Activated naive CD4-positive, alpha-beta T cell treated with anti-CD3 and anti-CD28 coated beads for 36 hours (primary cell): ENCODE measurements at regions of chr2 and their contacts with region 1.

Region 1: DNA sequence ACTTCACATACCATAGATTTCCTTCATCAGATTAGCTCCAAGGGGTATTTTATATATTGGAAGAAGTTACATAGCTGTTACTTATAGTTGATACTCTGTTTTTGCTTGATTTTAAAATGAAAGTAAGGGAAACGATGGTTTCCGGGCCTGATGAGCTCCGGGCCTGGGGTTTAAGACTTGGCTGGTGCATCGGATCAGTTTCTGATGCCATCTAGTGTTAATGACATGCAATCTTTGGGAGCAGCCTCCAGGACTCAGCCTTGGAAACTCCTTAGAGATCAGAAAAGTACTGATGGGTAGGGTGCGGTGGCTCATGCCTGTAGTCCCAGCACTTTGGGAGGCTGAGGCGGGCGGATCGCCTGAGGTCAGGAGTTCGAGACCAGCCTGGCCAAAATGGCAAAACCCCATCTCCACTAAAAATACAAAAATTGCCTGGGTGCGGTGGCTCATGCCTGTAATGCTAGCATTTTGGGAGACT is 47.1 kb upstream of the CNOT11 start:
- DNase-seq: peak; percentile 76
- H3K4me3 Mint-ChIP-seq: peak overlapping the region; percentile 45
- H3K27ac Mint-ChIP-seq: peak overlapping the region; percentile 65
- H3K4me1 Mint-ChIP-seq: no peaks in the 10 kb centered on the region
- H3K27me3 Mint-ChIP-seq: no peaks in the 10 kb centered on the region

Region 2: DNA sequence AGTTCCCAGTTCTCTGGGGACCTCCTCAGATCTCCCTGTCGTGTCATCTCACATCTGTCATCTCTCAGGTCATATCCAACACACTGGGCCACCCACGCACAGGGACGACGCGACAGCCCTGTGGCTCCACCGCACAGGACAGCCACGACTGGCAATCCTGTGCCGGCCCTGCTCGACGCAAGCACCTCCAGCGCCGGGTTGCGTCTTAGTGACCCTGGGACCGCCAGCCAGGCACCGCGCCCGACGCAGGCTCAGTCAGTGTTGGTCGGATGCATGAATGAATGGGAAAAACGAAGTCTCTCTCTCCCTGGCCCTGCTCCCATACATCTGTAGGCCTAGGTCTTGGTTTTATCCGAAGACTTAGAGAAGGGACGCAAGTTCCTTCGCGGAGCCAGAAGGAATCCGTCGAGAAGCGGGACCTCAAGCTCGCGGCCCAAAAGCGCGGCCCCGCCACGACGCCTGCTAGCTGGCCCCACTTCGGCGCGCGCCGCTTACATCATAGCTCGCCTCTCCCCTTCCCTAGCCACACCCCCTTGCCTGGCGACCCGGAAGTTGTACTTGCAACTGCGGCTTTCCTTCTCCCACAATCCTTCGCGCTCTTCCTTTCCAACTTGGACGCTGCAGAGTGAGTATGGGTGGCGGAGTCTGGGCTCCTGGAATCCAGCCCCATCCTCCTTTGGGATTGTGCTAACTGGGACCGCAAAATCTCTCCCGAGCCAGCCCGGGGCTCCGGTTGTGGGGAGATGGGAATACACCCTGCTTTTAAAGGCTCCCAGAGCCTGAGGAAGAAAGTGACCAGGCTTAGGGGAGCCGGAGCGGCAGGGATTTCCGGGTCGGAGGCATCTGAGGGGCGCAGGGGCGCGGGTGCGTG is 203.6 kb before region 1 on chr2 and contains the start of gene RPL31:
- CTCF ChIA-PET with region 1: interaction called, 12 read pairs
- intact Hi-C with region 1: no loop called
- DNase-seq: peak; percentile 99
- H3K4me3 Mint-ChIP-seq: peak within 1 kb of the TSS; percentile 99
- H3K27ac Mint-ChIP-seq: peak within 1 kb of the TSS; percentile 94
- H3K4me1 Mint-ChIP-seq: peaks cover 46% of the 10 kb centered on the region
- H3K27me3 Mint-ChIP-seq: no peaks in the 10 kb centered on the region
- total RNA-seq, gene RPL31: 2,225 to 2,255 TPM

Region 3: DNA sequence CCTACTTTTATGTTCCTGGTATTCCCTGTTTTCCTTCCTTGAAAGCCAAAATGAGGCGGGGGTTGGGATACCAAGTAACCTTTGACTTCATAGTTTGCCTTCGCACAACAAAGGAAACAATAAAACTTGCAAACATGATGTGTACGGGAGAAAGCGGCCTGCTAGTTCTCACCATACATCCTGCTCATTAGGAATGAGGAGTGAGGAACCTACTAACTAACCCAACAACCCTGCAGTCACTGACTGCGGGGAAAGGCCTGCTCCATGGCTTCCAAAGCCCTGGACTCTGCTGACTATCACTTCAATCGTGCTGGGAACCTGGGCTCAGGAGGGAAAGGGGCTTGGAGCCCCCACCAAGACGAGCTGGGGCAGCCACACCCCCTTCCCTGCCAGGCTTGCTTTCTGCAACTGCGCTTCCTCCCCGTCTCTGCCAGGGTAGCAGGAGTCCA is 179.3 kb before region 1 on chr2:
- CTCF ChIA-PET with region 1: interaction called, 10 read pairs
- intact Hi-C with region 1: no loop called
- DNase-seq: no peak
- H3K4me3 Mint-ChIP-seq: no peak overlapping the region
- H3K27ac Mint-ChIP-seq: no peak overlapping the region
- H3K4me1 Mint-ChIP-seq: no peaks in the 10 kb centered on the region
- H3K27me3 Mint-ChIP-seq: no peaks in the 10 kb centered on the region

Region 4: GRCh38 chr2:101151141-101151858 is 54.3 kb before region 1 on chr2 and contains the start of gene TBC1D8:
- CTCF ChIA-PET with region 1: interaction called, 9 read pairs
- intact Hi-C with region 1: loop called (anchors 1 kb)
- DNase-seq: peak; percentile 66
- H3K4me3 Mint-ChIP-seq: peak within 1 kb of the TSS; percentile 77
- H3K27ac Mint-ChIP-seq: no peak within 1 kb of the TSS
- H3K4me1 Mint-ChIP-seq: peaks cover 17% of the 10 kb centered on the region
- H3K27me3 Mint-ChIP-seq: peaks cover 19% of the 10 kb centered on the region
- total RNA-seq, gene TBC1D8: 4.0 to 4.5 TPM

Region 5: DNA sequence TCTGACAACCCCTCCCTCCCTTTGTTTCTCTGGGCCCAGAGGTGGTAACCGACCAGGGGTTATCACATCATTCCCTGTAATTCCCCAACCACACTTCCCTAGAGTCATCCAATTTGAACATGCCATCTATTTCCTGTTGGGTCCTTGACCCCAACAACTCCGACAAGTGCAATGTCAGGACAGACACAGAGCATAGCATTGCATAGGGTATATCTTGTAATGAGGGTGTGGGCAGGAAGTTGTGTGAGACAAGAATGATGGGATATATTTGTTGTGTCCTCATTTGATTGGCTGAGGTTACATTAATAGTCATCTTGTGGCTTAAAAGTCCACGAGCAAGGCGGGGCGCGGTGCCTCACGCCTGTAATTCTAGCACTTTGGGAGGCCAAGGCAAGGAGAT is 13.7 kb after region 1 on chr2:
- CTCF ChIA-PET with region 1: interaction called, 14 read pairs
- intact Hi-C with region 1: no loop called
- DNase-seq: no peak
- H3K4me3 Mint-ChIP-seq: no peak overlapping the region
- H3K27ac Mint-ChIP-seq: no peak overlapping the region
- H3K4me1 Mint-ChIP-seq: peaks cover 9% of the 10 kb centered on the region
- H3K27me3 Mint-ChIP-seq: no peaks in the 10 kb centered on the region